ENCODE measurements at regions of chr11 and their contacts with region 1.

Region 1: GRCh38 chr11:126233391-126233790 is 21.8 kb downstream of the FAM118B start:
- DNase-seq: no peak
- H3K4me3 Mint-ChIP-seq: no peak overlapping the region
- H3K27ac Mint-ChIP-seq: no peak overlapping the region
- H3K4me1 Mint-ChIP-seq: peaks cover 2% of the 10 kb centered on the region
- H3K27me3 Mint-ChIP-seq: no peaks in the 10 kb centered on the region

Region 2: GRCh38 chr11:126216526-126217305 is 16.7 kb before region 1 on chr11:
- CTCF ChIA-PET with region 1: no interaction called
- POLR2A ChIA-PET with region 1: no interaction called
- intact Hi-C with region 1: loop called (anchors 1 kb)
- DNase-seq: no peak
- H3K4me3 Mint-ChIP-seq: no peak overlapping the region
- H3K27ac Mint-ChIP-seq: no peak overlapping the region
- H3K4me1 Mint-ChIP-seq: peaks cover 36% of the 10 kb centered on the region
- H3K27me3 Mint-ChIP-seq: no peaks in the 10 kb centered on the region